ENCODE measurements at regions of chr15 and their contacts with region 1.

Region 1: GRCh38 chr15:60326824-60327654 is 70.7 kb downstream of the ANXA2 start:
- DNase-seq: no peak
- ATAC-seq: peak; percentile 37
- H3K4me3 Mint-ChIP-seq: no peak overlapping the region
- H3K27ac Mint-ChIP-seq: no peak overlapping the region
- H3K4me1 Mint-ChIP-seq: peaks cover 4% of the 10 kb centered on the region
- H3K27me3 Mint-ChIP-seq: peaks cover 35% of the 10 kb centered on the region
- CTCF ChIP-seq: no peak

Region 2: GRCh38 chr15:59725172-59725486 is 601.9 kb before region 1 on chr15:
- CTCF ChIA-PET with region 1: interaction called, 12 read pairs
- POLR2A ChIA-PET with region 1: no interaction called
- intact Hi-C with region 1: loop called (anchors 10 kb)
- DNase-seq: no peak
- ATAC-seq: no peak
- H3K4me3 Mint-ChIP-seq: no peak overlapping the region
- H3K27ac Mint-ChIP-seq: no peak overlapping the region
- H3K4me1 Mint-ChIP-seq: no peaks in the 10 kb centered on the region
- H3K27me3 Mint-ChIP-seq: peaks cover 18% of the 10 kb centered on the region
- CTCF ChIP-seq: no peak

Region 3: GRCh38 chr15:59917504-59918157 is 409.4 kb before region 1 on chr15:
- CTCF ChIA-PET with region 1: no interaction called
- POLR2A ChIA-PET with region 1: no interaction called
- intact Hi-C with region 1: loop called (anchors 5 kb)
- DNase-seq: peak; percentile 17
- ATAC-seq: peak; percentile 62
- H3K4me3 Mint-ChIP-seq: no peak overlapping the region
- H3K27ac Mint-ChIP-seq: no peak overlapping the region
- H3K4me1 Mint-ChIP-seq: no peaks in the 10 kb centered on the region
- H3K27me3 Mint-ChIP-seq: peaks cover 3% of the 10 kb centered on the region
- CTCF ChIP-seq: no peak

Region 4: DNA sequence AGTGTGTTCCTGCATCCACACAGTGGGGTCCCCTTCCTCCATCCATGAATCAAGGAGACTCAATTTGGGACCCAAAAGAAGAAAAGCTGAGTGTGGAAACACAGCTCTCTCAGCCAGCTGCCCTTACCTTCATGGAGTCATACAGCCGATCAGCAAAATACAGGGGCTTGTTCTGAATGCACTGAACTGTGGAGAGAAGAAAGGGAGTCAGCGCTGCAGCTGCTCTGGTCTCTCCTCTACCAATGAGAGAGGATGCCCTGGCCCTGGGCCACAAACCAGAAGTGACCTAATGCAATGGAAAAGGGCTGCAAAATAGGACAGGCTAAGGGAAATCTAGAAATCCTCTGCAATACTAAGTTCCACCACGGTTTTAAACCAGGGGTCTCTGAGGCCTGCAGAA is 24.0 kb after region 1 on chr15:
- CTCF ChIA-PET with region 1: no interaction called
- POLR2A ChIA-PET with region 1: no interaction called
- intact Hi-C with region 1: no loop called
- DNase-seq: no peak
- ATAC-seq: no peak
- H3K4me3 Mint-ChIP-seq: no peak overlapping the region
- H3K27ac Mint-ChIP-seq: no peak overlapping the region
- H3K4me1 Mint-ChIP-seq: no peaks in the 10 kb centered on the region
- H3K27me3 Mint-ChIP-seq: no peaks in the 10 kb centered on the region
- CTCF ChIP-seq: no peak

Measured in activated B cell treated with CpG ODN at 0.5 μM for 24 hours (primary cell).